GM12878 (cell line): ENCODE measurements at regions of chr20 and their contacts with region 1.

Region 1: DNA sequence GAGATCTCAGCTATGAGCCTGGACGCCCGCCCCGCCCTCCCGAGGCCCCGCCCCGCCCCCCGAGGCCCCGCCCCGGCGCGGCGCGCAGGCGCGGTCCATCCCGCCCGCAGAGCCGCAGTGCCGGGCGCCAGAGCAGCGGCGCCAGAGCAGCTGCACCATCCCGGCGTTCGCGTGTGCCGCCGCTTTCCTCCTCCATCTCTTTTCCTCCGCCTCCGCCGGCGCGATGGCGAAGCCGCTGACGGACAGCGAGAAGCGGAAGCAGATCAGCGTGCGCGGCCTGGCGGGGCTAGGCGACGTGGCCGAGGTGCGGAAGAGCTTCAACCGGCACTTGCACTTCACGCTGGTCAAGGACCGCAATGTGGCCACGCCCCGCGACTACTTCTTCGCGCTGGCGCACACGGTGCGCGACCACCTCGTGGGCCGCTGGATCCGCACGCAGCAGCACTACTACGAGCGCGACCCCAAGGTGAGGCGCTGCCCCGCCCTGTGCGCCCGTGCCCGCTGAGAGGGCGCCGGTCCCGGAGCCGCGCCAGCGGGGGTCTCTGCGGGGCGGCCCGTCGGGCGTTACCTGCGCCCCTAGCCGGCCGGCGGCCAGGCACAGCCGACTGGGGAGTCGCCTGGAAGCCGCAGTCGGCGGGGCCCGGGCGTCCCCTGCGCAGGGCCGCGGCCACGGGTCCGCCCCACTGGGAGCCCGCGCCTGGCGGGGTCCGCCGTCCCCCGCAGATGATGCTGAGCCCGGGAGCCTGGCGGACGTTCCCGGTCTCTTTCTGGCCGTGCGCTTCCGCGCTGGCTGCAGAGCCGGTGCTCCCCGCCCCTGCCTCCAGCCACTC is at the start of gene PYGB:
- DNase-seq: peak; percentile 41
- ATAC-seq: peak; percentile 80
- H3K4me3 ChIP-seq: peak within 1 kb of the TSS; percentile 91
- H3K27ac ChIP-seq: peak within 1 kb of the TSS; percentile 66
- H3K4me1 ChIP-seq: peaks cover 28% of the 10 kb centered on the region
- H3K27me3 ChIP-seq: no peaks in the 10 kb centered on the region
- CTCF ChIP-seq: no peak
- EP300 ChIP-seq: no peak
- POLR2A ChIP-seq: peak; percentile 93
- RAD21 ChIP-seq: no peak
- polyA plus RNA-seq, gene PYGB: 0.34 to 1.3 TPM

Region 2: GRCh38 chr20:25195014-25195961 is 52.9 kb before region 1 on chr20 and contains the start of gene ENTPD6:
- CTCF ChIA-PET with region 1: interaction called, 3 read pairs
- POLR2A ChIA-PET with region 1: no interaction called
- RAD21 ChIA-PET with region 1: no interaction called
- SMC1A ChIA-PET with region 1: interaction called, 3 read pairs
- in situ Hi-C with region 1: no loop called
- intact Hi-C with region 1: loop called (anchors 10 kb)
- DNase-seq: peak; percentile 63
- ATAC-seq: peak; percentile 83
- H3K4me3 ChIP-seq: peak within 1 kb of the TSS; percentile 91
- H3K27ac ChIP-seq: peak within 1 kb of the TSS; percentile 59; the same call in 1 of the 2 replicates
- H3K4me1 ChIP-seq: peaks cover 11% of the 10 kb centered on the region
- H3K27me3 ChIP-seq: no peaks in the 10 kb centered on the region; a peak in 1 of 4 replicates
- CTCF ChIP-seq: peak in 2 of 3 experiments; percentile 3 to 8; a peak in 1 of 6 replicates
- EP300 ChIP-seq: no peak
- POLR2A ChIP-seq: peak; percentile 79
- RAD21 ChIP-seq: no peak
- polyA plus RNA-seq, gene ENTPD6: 0.53 to 2.5 TPM

Region 3: DNA sequence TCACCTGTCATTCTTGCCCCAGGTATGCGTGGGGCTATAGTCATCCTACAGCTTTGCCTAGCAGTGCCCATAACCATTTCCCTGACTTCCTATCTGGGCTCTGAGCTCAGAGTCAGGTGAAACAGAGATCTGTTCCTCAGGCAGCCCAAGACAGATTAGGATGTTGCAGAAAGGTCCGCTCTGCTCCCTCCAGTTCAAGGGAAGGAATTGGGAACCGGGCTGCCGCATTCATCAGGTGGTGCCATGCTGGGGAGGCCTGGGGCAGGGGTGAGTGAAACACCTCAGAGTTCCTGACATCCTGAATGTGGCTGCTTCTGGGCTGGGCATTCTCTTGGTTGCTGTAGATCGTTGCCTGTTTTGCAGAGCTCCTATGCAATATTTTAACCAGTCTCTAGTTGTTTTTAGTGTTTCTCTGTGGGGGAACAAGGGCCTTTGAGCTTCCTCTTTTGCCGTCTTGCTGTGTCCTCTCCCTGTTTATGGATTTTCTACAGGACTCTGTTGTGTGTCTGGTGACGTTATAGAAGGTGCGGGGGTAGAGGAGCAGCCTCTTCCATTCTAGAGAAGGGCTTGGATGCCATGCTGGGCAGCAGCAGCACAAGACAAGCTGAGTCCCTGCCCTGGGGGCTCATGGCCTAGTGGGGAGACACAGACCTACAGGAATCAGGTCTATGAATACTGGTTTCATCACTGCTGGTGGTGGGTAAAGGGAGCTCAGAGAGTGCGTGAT is 43.5 kb before region 1 on chr20:
- CTCF ChIA-PET with region 1: interaction called, 6 read pairs
- POLR2A ChIA-PET with region 1: interaction called, 4 read pairs
- RAD21 ChIA-PET with region 1: no interaction called
- SMC1A ChIA-PET with region 1: interaction called, 11 read pairs
- in situ Hi-C with region 1: no loop called
- intact Hi-C with region 1: loop called (anchors 10 kb)
- DNase-seq: no peak
- ATAC-seq: peak; percentile 31
- H3K4me3 ChIP-seq: no peak overlapping the region
- H3K27ac ChIP-seq: no peak overlapping the region
- H3K4me1 ChIP-seq: peaks cover 5% of the 10 kb centered on the region; the same call in 1 of the 2 replicates
- H3K27me3 ChIP-seq: no peaks in the 10 kb centered on the region
- CTCF ChIP-seq: no peak
- EP300 ChIP-seq: no peak
- POLR2A ChIP-seq: no peak
- RAD21 ChIP-seq: no peak

Region 4: DNA sequence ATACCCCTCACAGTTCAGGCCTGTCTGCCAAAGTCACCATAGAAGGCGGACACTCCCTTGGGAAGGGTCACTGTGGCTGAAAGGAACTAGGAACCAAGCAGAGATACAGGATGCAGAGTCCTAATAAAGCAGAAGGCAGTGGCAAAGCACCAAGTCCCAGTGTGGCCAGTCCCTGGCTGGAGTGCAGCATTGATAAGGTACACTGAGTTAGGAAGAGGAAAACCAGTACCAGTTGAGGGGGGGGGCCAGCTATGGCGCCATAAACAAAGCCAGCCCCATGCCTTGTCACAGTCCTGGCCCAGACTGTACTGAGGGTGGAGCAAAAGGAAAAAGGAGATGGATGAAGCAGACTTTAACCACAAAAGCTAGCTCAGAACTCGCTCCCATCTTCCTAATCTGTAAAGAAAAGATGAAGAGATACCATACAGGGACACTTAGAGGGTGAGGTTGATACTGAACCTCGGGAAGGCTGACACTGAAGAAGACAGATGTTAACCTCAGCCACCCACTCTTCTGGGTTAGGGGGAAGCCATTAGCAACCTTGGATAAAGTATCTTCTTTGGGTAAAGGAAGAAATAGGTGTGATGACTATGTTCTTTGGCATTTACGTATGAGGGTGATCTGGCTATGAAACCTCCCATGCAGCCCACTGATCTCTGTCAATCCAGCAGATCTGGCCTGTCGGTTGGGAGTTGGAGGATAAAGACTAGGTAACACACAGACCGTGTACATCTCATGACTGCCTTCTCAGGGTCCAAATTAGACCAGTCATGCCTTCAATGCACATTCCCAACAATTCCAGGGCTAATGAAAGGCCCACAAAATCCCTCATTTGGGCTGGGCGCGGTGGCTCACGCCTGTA is 134.8 kb after region 1 on chr20:
- CTCF ChIA-PET with region 1: no interaction called
- POLR2A ChIA-PET with region 1: no interaction called
- RAD21 ChIA-PET with region 1: no interaction called
- SMC1A ChIA-PET with region 1: no interaction called
- in situ Hi-C with region 1: no loop called
- intact Hi-C with region 1: no loop called
- DNase-seq: no peak
- ATAC-seq: no peak
- H3K4me3 ChIP-seq: no peak overlapping the region
- H3K27ac ChIP-seq: no peak overlapping the region
- H3K4me1 ChIP-seq: peaks cover 4% of the 10 kb centered on the region
- H3K27me3 ChIP-seq: no peaks in the 10 kb centered on the region
- CTCF ChIP-seq: no peak
- EP300 ChIP-seq: no peak
- POLR2A ChIP-seq: no peak
- RAD21 ChIP-seq: no peak